ENCODE measurements at regions of chr10 and their contacts with region 1.

Region 1: GRCh38 chr10:62384057-62384446 is 9.9 kb downstream of the ZNF365 start:
- DNase-seq: peak; percentile 58 to 83
- ATAC-seq: peak; percentile 94 to 99 (median 96)
- H3K4me3 ChIP-seq: no peak overlapping the region
- H3K4me3 Mint-ChIP-seq: peak overlapping the region; percentile 82
- H3K27ac ChIP-seq: peak overlapping the region; percentile 62
- H3K27ac Mint-ChIP-seq: peak overlapping the region; percentile 75 to 80
- H3K4me1 ChIP-seq: peaks cover 9% of the 10 kb centered on the region
- H3K4me1 Mint-ChIP-seq: peaks cover 61 to 66% of the 10 kb centered on the region in 2 donors
- H3K27me3 ChIP-seq: no peaks in the 10 kb centered on the region
- H3K27me3 Mint-ChIP-seq: peaks cover 2 to 13% of the 10 kb centered on the region in 2 donors
- CTCF ChIP-seq: no peak

Region 2: GRCh38 chr10:61673354-61673753 is 710.7 kb before region 1 on chr10:
- intact Hi-C with region 1: no loop called
- DNase-seq: no peak
- ATAC-seq: no peak
- H3K4me3 ChIP-seq: no peak overlapping the region
- H3K4me3 Mint-ChIP-seq: no peak overlapping the region
- H3K27ac ChIP-seq: no peak overlapping the region
- H3K27ac Mint-ChIP-seq: no peak overlapping the region
- H3K4me1 ChIP-seq: no peaks in the 10 kb centered on the region
- H3K4me1 Mint-ChIP-seq: no peaks in the 10 kb centered on the region
- H3K27me3 ChIP-seq: no peaks in the 10 kb centered on the region
- H3K27me3 Mint-ChIP-seq: no peaks in the 10 kb centered on the region
- CTCF ChIP-seq: no peak

Region 3: GRCh38 chr10:61903221-61903927 is 480.7 kb before region 1 on chr10:
- intact Hi-C with region 1: loop called (anchors 5 kb)
- DNase-seq: peak; percentile 68 to 81
- ATAC-seq: peak; percentile 46 to 72 (median 64)
- H3K4me3 ChIP-seq: peak overlapping the region; percentile 81
- H3K4me3 Mint-ChIP-seq: peak overlapping the region; percentile 93
- H3K27ac ChIP-seq: peak overlapping the region; percentile 92
- H3K27ac Mint-ChIP-seq: peak overlapping the region; percentile 87 to 89
- H3K4me1 ChIP-seq: peaks cover 3% of the 10 kb centered on the region
- H3K4me1 Mint-ChIP-seq: peaks cover 57 to 60% of the 10 kb centered on the region in 2 donors
- H3K27me3 ChIP-seq: no peaks in the 10 kb centered on the region
- H3K27me3 Mint-ChIP-seq: no peaks in the 10 kb centered on the region
- CTCF ChIP-seq: peak; percentile 16

Region 4: GRCh38 chr10:61918140-61918539 is 465.9 kb before region 1 on chr10:
- intact Hi-C with region 1: no loop called
- DNase-seq: no peak
- ATAC-seq: no peak
- H3K4me3 ChIP-seq: no peak overlapping the region
- H3K4me3 Mint-ChIP-seq: no peak overlapping the region
- H3K27ac ChIP-seq: no peak overlapping the region
- H3K27ac Mint-ChIP-seq: peak overlapping the region in 1 of 2 donors; percentile 46
- H3K4me1 ChIP-seq: no peaks in the 10 kb centered on the region
- H3K4me1 Mint-ChIP-seq: peaks cover 32 to 53% of the 10 kb centered on the region in 2 donors
- H3K27me3 ChIP-seq: no peaks in the 10 kb centered on the region
- H3K27me3 Mint-ChIP-seq: no peaks in the 10 kb centered on the region
- CTCF ChIP-seq: no peak

Region 5: DNA sequence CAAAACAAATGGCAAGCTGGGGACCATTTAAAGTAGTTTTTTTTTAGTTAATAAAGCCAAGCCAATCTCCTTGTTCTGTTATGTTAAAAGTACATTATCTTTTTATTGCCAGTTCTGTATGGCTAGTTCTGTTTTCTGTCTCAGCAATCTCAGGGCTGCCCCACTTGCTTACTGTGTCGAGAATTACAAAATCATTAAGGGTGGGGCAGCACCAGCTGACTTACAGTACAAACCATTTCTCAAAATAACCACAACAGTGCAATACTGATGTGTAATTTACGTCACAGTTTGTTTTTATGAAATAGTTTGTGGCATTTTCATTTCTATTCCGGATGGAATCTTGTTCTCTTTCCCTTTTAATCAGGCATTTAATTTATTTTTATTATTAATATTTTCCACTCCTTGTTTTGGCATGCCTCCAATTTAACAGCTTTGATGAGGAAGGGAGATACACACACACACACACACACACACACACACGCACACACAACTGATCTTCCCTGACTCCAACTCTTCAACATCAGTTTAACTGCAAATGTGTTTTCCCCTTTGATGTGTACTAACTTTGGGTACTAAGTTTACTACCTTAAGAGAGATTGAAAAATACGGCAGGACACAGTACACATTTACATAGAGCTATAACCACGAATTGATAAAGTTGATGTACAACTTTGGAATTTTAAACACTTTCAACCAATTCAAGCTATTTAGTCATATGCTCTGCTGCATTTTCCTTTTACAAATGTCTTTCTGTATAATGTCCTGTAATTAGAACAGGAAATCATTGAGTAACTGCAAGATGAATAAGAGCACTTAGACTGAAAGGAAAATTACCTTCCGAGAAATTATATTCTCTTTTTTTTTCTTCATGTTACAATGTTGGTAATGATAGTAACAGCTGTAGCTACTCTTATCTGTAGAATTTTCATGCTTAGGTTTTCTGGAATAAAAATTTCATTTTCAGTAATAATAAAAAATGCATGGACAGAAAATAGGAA is 391.1 kb before region 1 on chr10:
- intact Hi-C with region 1: loop called (anchors 5 kb)
- DNase-seq: peak; percentile 43 to 84
- ATAC-seq: peak; percentile 72 to 93 (median 84)
- H3K4me3 ChIP-seq: peak overlapping the region; percentile 14
- H3K4me3 Mint-ChIP-seq: peak overlapping the region; percentile 92
- H3K27ac ChIP-seq: peak overlapping the region; percentile 87
- H3K27ac Mint-ChIP-seq: peak overlapping the region; percentile 93 to 96
- H3K4me1 ChIP-seq: peaks cover 13% of the 10 kb centered on the region
- H3K4me1 Mint-ChIP-seq: peaks cover 50 to 57% of the 10 kb centered on the region in 2 donors
- H3K27me3 ChIP-seq: no peaks in the 10 kb centered on the region
- H3K27me3 Mint-ChIP-seq: no peaks in the 10 kb centered on the region
- CTCF ChIP-seq: no peak

Region 6: DNA sequence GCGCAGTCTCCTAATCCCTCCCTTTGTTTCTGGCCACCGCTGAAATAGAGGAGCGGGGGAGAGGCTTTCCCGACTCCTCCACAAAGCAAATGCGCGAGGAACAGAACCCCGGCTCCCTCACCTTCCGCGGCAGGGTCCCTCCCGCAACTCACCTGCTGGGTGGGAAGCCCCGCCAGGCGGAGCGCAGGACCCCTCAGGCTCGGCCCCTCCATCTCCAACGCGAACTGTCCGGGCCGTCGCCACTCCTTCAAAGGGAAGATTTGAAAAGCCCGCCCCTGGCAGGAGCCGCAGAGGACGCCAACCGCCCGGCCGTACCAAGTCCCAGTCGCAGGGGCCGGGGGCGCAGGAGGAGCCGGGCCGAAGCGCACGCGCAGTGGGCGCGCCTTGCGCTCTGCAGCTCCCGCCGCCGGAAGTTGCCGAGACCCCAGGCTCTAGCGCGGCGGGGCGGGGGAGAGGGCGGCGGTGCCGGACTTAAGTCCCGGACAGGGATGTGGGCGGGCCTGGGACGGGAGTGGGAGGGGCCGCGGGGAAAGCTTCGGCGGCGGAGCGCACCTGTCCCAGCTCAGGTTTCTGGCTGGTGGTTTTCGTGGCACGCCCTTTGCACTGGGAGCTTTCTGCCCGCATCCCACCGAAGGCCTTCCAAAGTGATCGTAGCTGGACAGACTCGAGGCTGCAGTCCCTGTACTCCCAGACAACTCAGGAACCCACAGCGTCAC is 115.5 kb before region 1 on chr10 and contains the start of gene RTKN2:
- intact Hi-C with region 1: loop called (anchors 5 kb)
- DNase-seq: peak; percentile 65 to 79
- ATAC-seq: peak; percentile 89 to 93 (median 89)
- H3K4me3 ChIP-seq: peak within 1 kb of the TSS; percentile 79
- H3K4me3 Mint-ChIP-seq: peak within 1 kb of the TSS; percentile 94
- H3K27ac ChIP-seq: no peak within 1 kb of the TSS
- H3K27ac Mint-ChIP-seq: peak within 1 kb of the TSS; percentile 34 to 74
- H3K4me1 ChIP-seq: peaks cover 11% of the 10 kb centered on the region
- H3K4me1 Mint-ChIP-seq: peaks cover 17 to 28% of the 10 kb centered on the region in 2 donors
- H3K27me3 ChIP-seq: peaks cover 15% of the 10 kb centered on the region
- H3K27me3 Mint-ChIP-seq: peaks cover 15% of the 10 kb centered on the region in 2 donors
- CTCF ChIP-seq: no peak
- total RNA-seq, gene RTKN2: 0.31 to 0.61 (median 0.33) TPM

Region 7: DNA sequence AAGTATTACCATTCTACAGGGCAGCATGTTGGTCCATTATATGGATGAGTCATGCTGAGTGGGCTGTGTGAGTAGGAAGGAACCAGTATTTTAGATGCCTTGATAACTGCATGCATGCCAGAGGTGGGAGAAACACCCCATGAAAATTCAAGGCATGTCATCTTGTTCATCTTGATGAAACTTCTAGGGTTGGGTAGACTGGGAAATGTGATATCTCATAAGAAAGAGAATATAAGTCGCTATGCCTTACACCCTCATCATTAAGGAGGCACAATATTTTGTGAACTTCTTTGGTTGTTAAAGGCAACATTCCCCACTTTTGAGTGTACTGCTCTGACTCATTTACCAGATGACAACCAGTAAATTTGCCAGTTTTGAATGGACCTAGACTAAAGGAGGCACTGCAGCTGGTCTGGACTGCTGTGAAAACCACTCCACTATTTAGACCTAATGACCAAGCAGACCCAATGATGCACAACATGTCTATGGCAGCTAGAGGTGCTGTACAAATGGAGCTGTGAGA is 38.1 kb after region 1 on chr10:
- intact Hi-C with region 1: no loop called
- DNase-seq: no peak
- ATAC-seq: no peak
- H3K4me3 ChIP-seq: no peak overlapping the region
- H3K4me3 Mint-ChIP-seq: no peak overlapping the region
- H3K27ac ChIP-seq: no peak overlapping the region
- H3K27ac Mint-ChIP-seq: no peak overlapping the region
- H3K4me1 ChIP-seq: no peaks in the 10 kb centered on the region
- H3K4me1 Mint-ChIP-seq: no peaks in the 10 kb centered on the region
- H3K27me3 ChIP-seq: peaks cover 5% of the 10 kb centered on the region
- H3K27me3 Mint-ChIP-seq: peaks cover 10 to 32% of the 10 kb centered on the region in 2 donors
- CTCF ChIP-seq: no peak

Region 8: DNA sequence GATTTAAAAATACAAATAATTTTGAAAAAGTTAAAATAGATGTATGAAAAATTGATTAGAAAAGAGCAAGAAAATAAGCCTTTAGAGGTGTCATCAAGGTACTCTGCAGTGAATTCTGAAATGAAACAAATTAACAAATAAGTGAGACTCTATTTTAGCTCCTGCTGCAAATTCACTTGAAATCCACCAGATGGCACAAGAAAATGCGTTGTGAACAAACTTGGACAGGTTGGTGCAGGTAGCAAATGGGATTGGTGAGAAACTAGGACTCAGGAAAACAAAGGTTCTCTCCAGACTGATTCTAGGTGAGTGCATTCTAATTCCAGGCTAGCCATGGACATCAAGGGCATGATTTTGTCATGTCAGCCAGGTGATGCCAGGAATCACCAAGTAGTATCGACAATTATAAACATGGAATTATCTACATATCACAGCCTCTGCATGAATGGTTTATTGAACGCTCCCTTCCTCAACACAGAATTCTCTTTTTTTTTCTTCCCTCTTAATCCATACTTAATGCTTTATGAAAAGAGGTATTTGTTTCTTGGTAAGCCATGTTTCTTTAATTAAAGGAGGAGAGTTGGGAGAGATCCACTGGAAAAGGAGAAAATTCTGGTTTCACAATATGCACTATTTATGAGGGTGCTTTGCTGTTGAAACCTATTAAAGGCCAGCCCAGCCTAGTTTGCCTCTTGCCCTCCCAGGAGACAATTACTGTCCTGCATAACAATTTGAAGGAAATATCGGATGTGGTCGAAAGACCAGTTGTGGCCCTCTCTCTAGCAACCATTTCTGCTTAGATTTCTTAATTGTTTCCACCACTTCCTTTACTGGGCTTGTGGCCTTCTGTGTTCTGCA is 108.2 kb after region 1 on chr10:
- intact Hi-C with region 1: no loop called
- DNase-seq: peak in 1 of 2 donors; percentile 57
- ATAC-seq: no peak
- H3K4me3 ChIP-seq: no peak overlapping the region
- H3K4me3 Mint-ChIP-seq: no peak overlapping the region
- H3K27ac ChIP-seq: no peak overlapping the region
- H3K27ac Mint-ChIP-seq: no peak overlapping the region
- H3K4me1 ChIP-seq: peaks cover 7% of the 10 kb centered on the region
- H3K4me1 Mint-ChIP-seq: peaks cover 5 to 9% of the 10 kb centered on the region in 2 donors
- H3K27me3 ChIP-seq: peaks cover under 1% of the 10 kb centered on the region
- H3K27me3 Mint-ChIP-seq: peaks cover 7 to 17% of the 10 kb centered on the region in 2 donors
- CTCF ChIP-seq: peak; percentile 25

Region 9: GRCh38 chr10:62632071-62632809 is 248.2 kb after region 1 on chr10:
- intact Hi-C with region 1: loop called (anchors 5 kb)
- DNase-seq: peak; percentile 65 to 80
- ATAC-seq: peak; percentile 77 to 91 (median 83)
- H3K4me3 ChIP-seq: no peak overlapping the region
- H3K4me3 Mint-ChIP-seq: peak overlapping the region; percentile 63
- H3K27ac ChIP-seq: peak overlapping the region; percentile 85
- H3K27ac Mint-ChIP-seq: peak overlapping the region in 1 of 2 donors; percentile 99
- H3K4me1 ChIP-seq: peaks cover 44% of the 10 kb centered on the region
- H3K4me1 Mint-ChIP-seq: peaks cover 19 to 23% of the 10 kb centered on the region in 2 donors
- H3K27me3 ChIP-seq: no peaks in the 10 kb centered on the region
- H3K27me3 Mint-ChIP-seq: no peaks in the 10 kb centered on the region
- CTCF ChIP-seq: no peak

Region 10: DNA sequence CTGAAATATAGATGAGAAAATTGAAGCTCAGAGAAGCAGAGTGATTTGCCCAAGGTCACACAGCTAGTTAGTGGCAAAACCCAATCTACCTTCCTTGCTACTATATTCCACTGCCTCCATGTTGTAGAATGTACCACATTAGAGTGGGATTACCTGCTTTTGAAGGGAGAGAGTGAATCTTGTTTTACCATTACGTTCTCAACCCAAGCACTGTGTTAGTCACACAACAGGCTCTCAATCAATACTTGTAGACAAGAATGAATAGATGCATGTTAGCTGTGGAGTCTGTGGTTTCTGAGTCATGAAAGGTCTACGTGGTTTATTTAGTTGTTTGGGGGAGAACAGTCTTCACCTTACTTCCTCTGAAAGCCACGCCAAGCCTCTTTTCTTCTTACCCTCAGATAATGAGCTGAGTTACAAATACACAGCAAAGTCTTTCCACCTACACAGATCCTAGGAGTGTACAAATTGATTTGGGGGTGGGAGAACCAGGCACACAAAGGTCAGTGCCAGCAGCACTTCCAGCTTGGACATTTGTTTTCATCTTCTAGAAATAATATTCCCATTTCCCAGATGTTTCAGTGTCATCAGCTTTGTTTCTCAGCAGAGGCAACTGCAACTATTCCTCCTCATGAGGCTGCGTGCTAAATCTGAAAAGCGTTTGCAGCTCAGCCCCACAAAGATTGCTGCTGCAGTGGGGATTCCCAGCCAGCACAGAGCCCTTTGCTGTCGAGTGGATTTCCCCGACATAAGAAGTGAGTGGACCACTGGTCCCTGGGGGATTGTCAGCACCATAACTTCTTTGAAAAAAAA is 349.0 kb after region 1 on chr10:
- intact Hi-C with region 1: loop called (anchors 5 kb)
- DNase-seq: peak; percentile 33 to 88
- ATAC-seq: peak; percentile 73 to 80 (median 79)
- H3K4me3 ChIP-seq: no peak overlapping the region
- H3K4me3 Mint-ChIP-seq: peak overlapping the region; percentile 28
- H3K27ac ChIP-seq: peak overlapping the region; percentile 50
- H3K27ac Mint-ChIP-seq: peak overlapping the region in 1 of 2 donors; percentile 78
- H3K4me1 ChIP-seq: peaks cover 33% of the 10 kb centered on the region
- H3K4me1 Mint-ChIP-seq: peaks cover 14% of the 10 kb centered on the region in 2 donors
- H3K27me3 ChIP-seq: no peaks in the 10 kb centered on the region
- H3K27me3 Mint-ChIP-seq: no peaks in the 10 kb centered on the region
- CTCF ChIP-seq: no peak

Region 11: GRCh38 chr10:62851442-62851841 is 467.4 kb after region 1 on chr10:
- intact Hi-C with region 1: loop called (anchors 5 kb)
- DNase-seq: peak in 1 of 2 donors; percentile 41
- ATAC-seq: no peak
- H3K4me3 ChIP-seq: no peak overlapping the region
- H3K4me3 Mint-ChIP-seq: no peak overlapping the region
- H3K27ac ChIP-seq: no peak overlapping the region
- H3K27ac Mint-ChIP-seq: peak overlapping the region in 1 of 2 donors; percentile 35
- H3K4me1 ChIP-seq: peaks cover 32% of the 10 kb centered on the region
- H3K4me1 Mint-ChIP-seq: peaks cover 55 to 56% of the 10 kb centered on the region in 2 donors
- H3K27me3 ChIP-seq: no peaks in the 10 kb centered on the region
- H3K27me3 Mint-ChIP-seq: no peaks in the 10 kb centered on the region
- CTCF ChIP-seq: peak; percentile 37

Measured in natural killer cell (primary cell).